PC-9 (cell line): ENCODE measurements at regions of chr22 and their contacts with region 1.

Region 1: DNA sequence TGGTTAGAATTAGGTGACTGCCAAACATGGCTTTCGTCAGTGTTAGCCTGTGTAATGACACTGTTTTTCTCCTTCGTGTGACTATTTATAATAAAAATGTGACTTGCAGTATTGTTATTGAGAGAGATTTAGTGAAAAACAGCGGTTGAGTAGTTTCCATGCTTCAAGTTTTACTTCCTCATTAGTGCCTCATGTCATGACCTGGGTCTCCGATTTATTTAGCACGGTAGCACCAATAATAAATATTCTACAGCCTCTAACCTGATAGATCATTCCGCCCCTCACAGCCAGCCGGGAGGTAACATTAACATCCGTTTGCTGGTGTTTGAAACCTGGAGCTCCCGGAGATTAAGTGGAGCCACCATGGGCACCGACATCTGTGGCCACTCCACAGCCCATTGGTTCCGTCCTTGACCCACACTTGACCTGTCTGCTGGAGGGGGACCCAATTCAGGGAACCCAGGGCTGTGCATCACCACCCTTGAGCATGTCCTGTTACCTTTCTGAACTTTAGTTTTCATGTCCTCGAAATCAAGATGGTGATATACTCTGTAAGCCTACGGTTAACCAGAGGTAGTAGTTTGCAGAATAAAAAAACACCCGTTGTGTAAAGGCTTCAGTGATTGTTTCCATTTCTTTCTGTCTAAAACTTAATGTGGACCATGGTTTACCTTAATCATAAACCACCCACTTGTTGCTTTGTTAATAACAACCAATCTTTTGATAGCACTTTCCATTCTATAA is 104.1 kb downstream of the ATXN10 start:
- DNase-seq: no peak
- H3K4me3 ChIP-seq: no peak overlapping the region
- H3K27ac ChIP-seq: peak overlapping the region; percentile 82
- H3K4me1 ChIP-seq: peaks cover 45% of the 10 kb centered on the region
- H3K27me3 ChIP-seq: no peaks in the 10 kb centered on the region
- CTCF ChIP-seq: no peak

Region 2: DNA sequence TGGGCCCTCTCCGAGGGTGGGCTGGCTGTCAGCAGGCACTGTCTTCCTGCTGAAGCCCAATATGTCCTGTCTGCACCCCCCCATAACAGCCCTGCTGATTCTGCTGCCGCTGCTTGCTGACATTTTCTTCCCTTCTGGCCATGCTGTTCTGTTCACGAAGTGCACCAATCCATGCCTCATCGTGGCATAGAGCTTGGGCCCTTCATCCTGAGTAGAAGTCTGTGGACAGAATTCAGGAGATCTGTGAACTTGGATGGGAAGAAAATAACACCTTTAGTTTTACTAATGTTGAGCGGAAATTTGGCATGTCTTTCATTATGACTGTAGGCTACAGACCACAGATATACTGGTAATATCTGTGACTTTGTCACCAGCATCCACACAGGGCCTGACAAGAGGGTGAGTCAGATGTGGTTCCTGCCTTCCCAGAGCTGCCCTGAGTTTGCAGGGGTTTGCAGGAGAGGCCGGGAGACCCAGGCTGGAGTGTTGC is 520.9 kb before region 1 on chr22:
- CTCF ChIA-PET with region 1: no interaction called
- POLR2A ChIA-PET with region 1: interaction called, 10 read pairs
- intact Hi-C with region 1: no loop called
- DNase-seq: no peak
- H3K4me3 ChIP-seq: no peak overlapping the region
- H3K27ac ChIP-seq: no peak overlapping the region
- H3K4me1 ChIP-seq: no peaks in the 10 kb centered on the region
- H3K27me3 ChIP-seq: no peaks in the 10 kb centered on the region
- CTCF ChIP-seq: no peak

Region 3: DNA sequence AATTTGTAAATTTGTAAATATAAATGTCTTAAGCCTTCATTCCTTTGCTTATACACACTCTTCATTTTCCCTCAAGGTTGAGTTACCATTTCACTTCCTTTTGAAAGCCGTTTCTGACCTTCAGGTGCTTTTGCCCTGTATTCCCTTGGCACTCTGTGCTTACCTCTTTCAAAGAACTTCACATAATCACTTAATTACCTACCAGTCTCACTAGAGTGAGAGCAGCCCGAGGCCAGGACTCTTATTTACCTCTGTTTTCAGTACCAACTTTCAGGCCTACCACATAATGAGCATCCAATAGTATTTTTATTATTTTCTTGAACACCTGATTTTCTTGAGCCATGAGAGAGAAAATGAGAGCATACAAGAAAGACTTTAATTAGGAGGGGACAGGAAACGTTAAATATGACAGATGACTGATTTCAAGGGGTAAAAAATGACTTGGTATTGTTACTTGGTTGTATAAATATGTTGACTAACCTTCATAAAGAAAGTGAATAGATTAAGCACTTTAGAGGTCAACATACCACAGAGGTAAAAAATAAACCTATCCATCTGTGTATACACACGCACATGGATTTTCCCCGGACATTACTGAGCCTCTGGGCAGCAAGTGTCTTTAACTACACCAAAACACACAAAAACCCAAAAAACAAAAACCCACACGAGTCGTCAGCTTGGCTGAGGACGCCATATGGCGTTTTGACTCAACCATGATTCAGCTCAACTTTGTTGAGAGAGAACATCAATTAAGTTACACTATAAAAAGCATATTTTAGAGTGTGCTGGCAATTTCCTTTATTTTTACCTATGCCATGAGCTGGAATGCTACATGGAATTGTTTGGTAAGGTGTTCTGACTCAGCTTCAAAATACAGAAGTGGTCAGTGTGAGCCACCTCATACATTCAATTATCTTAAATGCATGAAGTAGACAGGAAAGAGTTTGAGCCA is 96.5 kb before region 1 on chr22:
- CTCF ChIA-PET with region 1: no interaction called
- POLR2A ChIA-PET with region 1: no interaction called
- intact Hi-C with region 1: loop called (anchors 2 kb)
- DNase-seq: no peak
- H3K4me3 ChIP-seq: no peak overlapping the region
- H3K27ac ChIP-seq: peak overlapping the region; percentile 97
- H3K4me1 ChIP-seq: peaks cover 98% of the 10 kb centered on the region
- H3K27me3 ChIP-seq: no peaks in the 10 kb centered on the region
- CTCF ChIP-seq: no peak

Region 4: DNA sequence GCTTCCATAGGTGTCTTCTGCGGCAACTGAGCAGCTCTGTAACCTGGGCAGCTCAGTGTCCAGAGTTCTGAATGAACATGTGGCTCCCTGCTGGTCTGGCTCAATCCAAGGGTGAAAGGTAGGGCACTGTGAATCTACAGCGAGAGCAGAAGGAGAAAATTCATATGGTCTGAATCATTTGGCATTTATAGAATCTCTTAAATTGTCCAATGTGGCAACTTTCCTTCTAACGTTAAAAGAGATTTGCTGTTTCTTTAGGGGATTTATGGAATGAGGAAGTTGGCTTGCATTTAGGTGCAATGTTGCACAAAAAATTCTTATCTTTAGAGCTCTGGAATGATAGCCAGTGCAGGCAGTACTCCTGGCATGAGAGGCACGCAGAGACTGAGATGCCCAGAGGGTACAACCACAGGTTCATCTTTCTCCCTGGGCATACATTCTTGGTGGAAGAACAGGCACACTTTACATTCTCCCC is 87.1 kb before region 1 on chr22:
- CTCF ChIA-PET with region 1: no interaction called
- POLR2A ChIA-PET with region 1: interaction called, 7 read pairs
- intact Hi-C with region 1: loop called (anchors 1 kb)
- DNase-seq: peak; percentile 84 to 100
- H3K4me3 ChIP-seq: peak overlapping the region; percentile 32; the same call in 1 of the 2 replicates
- H3K27ac ChIP-seq: peak overlapping the region; percentile 97
- H3K4me1 ChIP-seq: peaks cover 97% of the 10 kb centered on the region
- H3K27me3 ChIP-seq: no peaks in the 10 kb centered on the region
- CTCF ChIP-seq: no peak

Region 5: GRCh38 chr22:45742866-45743450 is 32.8 kb before region 1 on chr22:
- CTCF ChIA-PET with region 1: no interaction called
- POLR2A ChIA-PET with region 1: no interaction called
- intact Hi-C with region 1: loop called (anchors 1 kb)
- DNase-seq: peak; percentile 56 to 93
- H3K4me3 ChIP-seq: peak overlapping the region; percentile 8; the same call in 1 of the 2 replicates
- H3K27ac ChIP-seq: peak overlapping the region; percentile 93
- H3K4me1 ChIP-seq: peaks cover 66% of the 10 kb centered on the region
- H3K27me3 ChIP-seq: no peaks in the 10 kb centered on the region
- CTCF ChIP-seq: no peak

Region 6: DNA sequence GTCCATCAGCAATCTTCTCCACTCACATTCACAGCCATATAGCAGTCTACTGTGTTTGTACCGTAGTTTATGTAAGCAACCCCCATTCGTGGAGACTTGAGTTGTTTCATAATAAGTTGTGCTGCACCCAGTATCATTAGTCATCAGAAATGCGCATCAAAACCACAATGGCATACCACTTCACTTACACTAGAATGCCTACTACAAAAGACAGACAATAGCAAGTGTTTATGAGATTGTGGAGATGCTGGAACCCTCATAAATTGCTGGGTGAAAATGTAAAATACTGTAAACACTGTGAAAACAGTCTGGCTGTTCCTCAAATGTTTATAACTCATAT is 29.2 kb after region 1 on chr22:
- CTCF ChIA-PET with region 1: no interaction called
- POLR2A ChIA-PET with region 1: no interaction called
- intact Hi-C with region 1: loop called (anchors 1 kb)
- DNase-seq: peak; percentile 55 to 98
- H3K4me3 ChIP-seq: no peak overlapping the region
- H3K27ac ChIP-seq: peak overlapping the region; percentile 55
- H3K4me1 ChIP-seq: peaks cover 30% of the 10 kb centered on the region
- H3K27me3 ChIP-seq: no peaks in the 10 kb centered on the region
- CTCF ChIP-seq: no peak